ENCODE measurements at regions of chr3 and their contacts with region 1.

Region 1: GRCh38 chr3:194296454-194297263 is 54.5 kb downstream of the CPN2 start:
- DNase-seq: peak; percentile 80
- ATAC-seq: peak; percentile 77
- H3K4me3 ChIP-seq: peak overlapping the region; percentile 33 to 48
- H3K27ac ChIP-seq: peak overlapping the region; percentile 96
- H3K4me1 ChIP-seq: peaks cover 70 to 79% of the 10 kb centered on the region in 2 experiments
- H3K27me3 ChIP-seq: no peaks in the 10 kb centered on the region
- CTCF ChIP-seq: no peak
- POLR2A ChIP-seq: no peak
- RAD21 ChIP-seq: peak; percentile 47

Region 2: GRCh38 chr3:194158922-194159439 is 137.7 kb before region 1 on chr3:
- CTCF ChIA-PET with region 1: no interaction called
- POLR2A ChIA-PET with region 1: no interaction called
- RAD21 ChIA-PET with region 1: no interaction called
- intact Hi-C with region 1: loop called (anchors 5 kb)
- DNase-seq: no peak
- ATAC-seq: peak; percentile 81
- H3K4me3 ChIP-seq: no peak overlapping the region
- H3K27ac ChIP-seq: no peak overlapping the region
- H3K4me1 ChIP-seq: peaks cover 5 to 22% of the 10 kb centered on the region in 2 experiments; a peak in 3 of 4 replicates
- H3K27me3 ChIP-seq: no peaks in the 10 kb centered on the region
- CTCF ChIP-seq: no peak
- POLR2A ChIP-seq: peak; percentile 38
- RAD21 ChIP-seq: peak; percentile 12; the same call in 1 of the 2 replicates

Region 3: DNA sequence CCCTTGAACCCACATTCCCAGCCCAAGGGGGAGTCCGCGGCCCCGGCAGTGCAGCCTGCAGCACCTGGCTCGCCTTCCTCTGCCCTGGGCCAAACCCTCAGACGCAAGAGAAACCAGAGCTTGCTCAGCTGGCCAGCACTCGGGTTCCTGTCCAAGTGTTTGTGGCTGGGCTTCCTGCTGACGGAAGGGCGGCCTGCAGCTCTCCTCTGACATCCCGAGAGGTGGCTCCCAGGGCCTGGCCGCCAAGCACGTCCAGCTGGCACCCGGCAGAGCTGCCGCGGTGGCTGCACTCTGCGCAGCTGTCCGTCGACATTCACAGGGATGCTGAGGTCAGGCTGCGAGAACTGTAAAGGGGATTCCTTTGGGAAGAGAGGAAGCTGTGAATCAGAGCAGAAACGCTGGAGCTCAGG is 31.2 kb before region 1 on chr3:
- CTCF ChIA-PET with region 1: no interaction called
- POLR2A ChIA-PET with region 1: no interaction called
- RAD21 ChIA-PET with region 1: no interaction called
- intact Hi-C with region 1: loop called (anchors 2 kb)
- DNase-seq: no peak
- ATAC-seq: no peak
- H3K4me3 ChIP-seq: no peak overlapping the region
- H3K27ac ChIP-seq: no peak overlapping the region
- H3K4me1 ChIP-seq: peaks cover 28 to 34% of the 10 kb centered on the region in 2 experiments
- H3K27me3 ChIP-seq: no peaks in the 10 kb centered on the region
- CTCF ChIP-seq: no peak
- POLR2A ChIP-seq: no peak
- RAD21 ChIP-seq: no peak

Region 4: GRCh38 chr3:194282436-194283122 is 14.1 kb before region 1 on chr3:
- CTCF ChIA-PET with region 1: no interaction called
- POLR2A ChIA-PET with region 1: no interaction called
- RAD21 ChIA-PET with region 1: no interaction called
- intact Hi-C with region 1: no loop called
- DNase-seq: no peak
- ATAC-seq: no peak
- H3K4me3 ChIP-seq: no peak overlapping the region
- H3K27ac ChIP-seq: no peak overlapping the region
- H3K4me1 ChIP-seq: peaks cover 3% of the 10 kb centered on the region in 2 experiments; a peak in 2 of 4 replicates
- H3K27me3 ChIP-seq: no peaks in the 10 kb centered on the region
- CTCF ChIP-seq: no peak
- POLR2A ChIP-seq: no peak
- RAD21 ChIP-seq: no peak

Measured in HCT116 (cell line).